GM12878 (cell line): ENCODE measurements at regions of chr17 and their contacts with region 1.

Region 1: DNA sequence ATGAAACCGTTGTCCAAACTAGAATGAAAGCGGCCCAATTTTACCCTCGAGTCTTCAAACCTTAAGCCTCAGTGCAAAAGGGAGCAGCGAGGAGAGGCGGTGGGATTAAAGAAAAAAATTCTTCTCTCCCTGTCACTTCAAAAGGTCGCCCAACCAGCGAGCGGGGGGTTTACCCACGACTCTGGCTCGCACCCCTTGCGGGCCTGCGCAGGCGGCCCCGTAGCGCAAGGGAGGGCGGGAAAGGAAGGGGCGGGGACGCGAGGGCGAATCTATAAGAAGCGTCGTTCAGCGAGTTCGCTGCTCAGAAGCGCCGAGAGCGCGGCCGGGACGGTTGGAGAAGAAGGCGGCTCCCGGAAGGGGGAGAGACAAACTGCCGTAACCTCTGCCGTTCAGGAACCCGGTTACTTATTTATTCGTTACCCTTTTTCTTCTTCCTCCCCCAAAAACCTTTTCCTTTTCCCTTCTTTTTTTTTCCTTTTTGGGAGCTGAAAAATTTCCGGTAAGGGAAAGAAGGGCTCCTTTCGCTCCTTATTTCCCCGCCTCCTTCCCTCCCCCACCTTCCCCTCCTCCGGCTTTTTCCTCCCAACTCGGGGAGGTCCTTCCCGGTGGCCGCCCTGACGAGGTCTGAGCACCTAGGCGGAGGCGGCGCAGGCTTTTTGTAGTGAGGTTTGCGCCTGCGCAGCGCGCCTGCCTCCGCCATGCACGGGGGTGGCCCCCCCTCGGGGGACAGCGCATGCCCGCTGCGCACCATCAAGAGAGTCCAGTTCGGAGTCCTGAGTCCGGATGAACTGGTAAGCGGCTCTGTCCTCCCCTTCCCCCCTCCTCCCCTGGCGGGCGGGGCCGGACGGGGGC is at the start of gene POLR2A:
- DNase-seq: peak; percentile 95
- ATAC-seq: peak; percentile 76
- H3K4me3 ChIP-seq: peak within 1 kb of the TSS; percentile 99
- H3K27ac ChIP-seq: peak within 1 kb of the TSS; percentile 100
- H3K4me1 ChIP-seq: no peaks in the 10 kb centered on the region; the same call in 1 of the 2 replicates
- H3K27me3 ChIP-seq: no peaks in the 10 kb centered on the region
- CTCF ChIP-seq: no peak
- EP300 ChIP-seq: peak in 1 of 2 experiments; percentile 63; a peak in 3 of 4 replicates
- POLR2A ChIP-seq: peak; percentile 98
- RAD21 ChIP-seq: no peak
- polyA plus RNA-seq, gene POLR2A: 1.7 to 2.8 TPM

Region 2: GRCh38 chr17:7336240-7337175 is 147.8 kb before region 1 on chr17 and contains the start of gene ACAP1:
- CTCF ChIA-PET with region 1: no interaction called
- POLR2A ChIA-PET with region 1: interaction called, 12 read pairs
- RAD21 ChIA-PET with region 1: no interaction called
- SMC1A ChIA-PET with region 1: no interaction called
- in situ Hi-C with region 1: no loop called
- intact Hi-C with region 1: no loop called
- DNase-seq: no peak
- ATAC-seq: peak; percentile 93
- H3K4me3 ChIP-seq: peak within 1 kb of the TSS; percentile 96
- H3K27ac ChIP-seq: peak within 1 kb of the TSS; percentile 99
- H3K4me1 ChIP-seq: peaks cover 27% of the 10 kb centered on the region
- H3K27me3 ChIP-seq: no peaks in the 10 kb centered on the region
- CTCF ChIP-seq: 0 out of 6 replicates have a peak, but pooled peaks of 1 of the 3 experiments have one; percentile 11
- EP300 ChIP-seq: peak in 1 of 2 experiments; percentile 13; a peak in 1 of 4 replicates
- POLR2A ChIP-seq: peak; percentile 45
- RAD21 ChIP-seq: no peak
- polyA plus RNA-seq, gene ACAP1: 5.7 to 25.2 TPM

Region 3: GRCh38 chr17:7410634-7411426 is 73.5 kb before region 1 on chr17:
- CTCF ChIA-PET with region 1: no interaction called
- POLR2A ChIA-PET with region 1: no interaction called
- RAD21 ChIA-PET with region 1: no interaction called
- SMC1A ChIA-PET with region 1: no interaction called
- in situ Hi-C with region 1: no loop called
- intact Hi-C with region 1: no loop called
- DNase-seq: no peak
- ATAC-seq: no peak
- H3K4me3 ChIP-seq: no peak overlapping the region
- H3K27ac ChIP-seq: no peak overlapping the region
- H3K4me1 ChIP-seq: no peaks in the 10 kb centered on the region
- H3K27me3 ChIP-seq: peaks cover 0 to 2% of the 10 kb centered on the region in 2 experiments; a peak in 3 of 4 replicates
- CTCF ChIP-seq: no peak
- EP300 ChIP-seq: no peak
- POLR2A ChIP-seq: no peak
- RAD21 ChIP-seq: no peak

Region 4: DNA sequence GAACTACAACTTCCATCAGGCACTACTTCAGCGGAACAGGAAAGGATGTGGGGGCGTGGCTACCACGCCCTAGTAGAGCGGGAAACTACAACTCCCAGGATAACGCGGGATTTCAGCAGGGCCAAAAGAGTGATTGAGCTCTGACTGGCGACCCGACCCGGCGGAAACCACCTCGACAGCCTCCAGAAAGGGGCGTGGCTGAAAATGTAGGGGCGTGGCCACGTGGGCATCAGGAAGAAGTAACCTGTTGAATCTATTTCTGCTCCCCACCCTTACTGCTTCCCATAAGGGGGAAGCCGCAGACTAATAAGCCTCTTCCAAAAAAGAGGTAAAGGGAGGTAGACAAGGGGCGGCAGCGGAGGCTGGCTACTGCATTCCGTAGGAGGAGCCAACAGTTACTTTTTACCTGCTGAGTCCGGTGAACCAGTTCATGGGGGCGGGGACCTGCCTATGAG is 49.0 kb before region 1 on chr17 and contains the start of gene TMEM102:
- CTCF ChIA-PET with region 1: interaction called, 28 read pairs
- POLR2A ChIA-PET with region 1: interaction called, 63 read pairs
- RAD21 ChIA-PET with region 1: interaction called, 19 read pairs
- SMC1A ChIA-PET with region 1: interaction called, 24 read pairs
- in situ Hi-C with region 1: no loop called
- intact Hi-C with region 1: loop called (anchors 1 kb)
- DNase-seq: peak; percentile 97
- ATAC-seq: peak; percentile 87
- H3K4me3 ChIP-seq: peak within 1 kb of the TSS; percentile 78
- H3K27ac ChIP-seq: peak within 1 kb of the TSS; percentile 60
- H3K4me1 ChIP-seq: peaks cover 19% of the 10 kb centered on the region
- H3K27me3 ChIP-seq: peaks cover 0 to 4% of the 10 kb centered on the region in 2 experiments; a peak in 1 of 4 replicates
- CTCF ChIP-seq: no peak
- EP300 ChIP-seq: no peak
- POLR2A ChIP-seq: 0 out of 2 replicates have a peak, but pooled peaks have one; percentile 28
- RAD21 ChIP-seq: no peak
- polyA plus RNA-seq, gene TMEM102: 0.04 TPM in 1 of 2 experiments, not detected in the other

Region 5: GRCh38 chr17:7454980-7455379 is 29.3 kb before region 1 on chr17:
- CTCF ChIA-PET with region 1: interaction called, 3 read pairs
- POLR2A ChIA-PET with region 1: interaction called, 17 read pairs
- RAD21 ChIA-PET with region 1: no interaction called
- SMC1A ChIA-PET with region 1: interaction called, 6 read pairs
- in situ Hi-C with region 1: no loop called
- intact Hi-C with region 1: loop called (anchors 1 kb)
- DNase-seq: no peak
- ATAC-seq: no peak
- H3K4me3 ChIP-seq: peak overlapping the region; percentile 83; the same call in 1 of the 2 replicates
- H3K27ac ChIP-seq: no peak overlapping the region
- H3K4me1 ChIP-seq: peaks cover 6% of the 10 kb centered on the region
- H3K27me3 ChIP-seq: no peaks in the 10 kb centered on the region
- CTCF ChIP-seq: no peak
- EP300 ChIP-seq: no peak
- POLR2A ChIP-seq: no peak
- RAD21 ChIP-seq: no peak

Region 6: DNA sequence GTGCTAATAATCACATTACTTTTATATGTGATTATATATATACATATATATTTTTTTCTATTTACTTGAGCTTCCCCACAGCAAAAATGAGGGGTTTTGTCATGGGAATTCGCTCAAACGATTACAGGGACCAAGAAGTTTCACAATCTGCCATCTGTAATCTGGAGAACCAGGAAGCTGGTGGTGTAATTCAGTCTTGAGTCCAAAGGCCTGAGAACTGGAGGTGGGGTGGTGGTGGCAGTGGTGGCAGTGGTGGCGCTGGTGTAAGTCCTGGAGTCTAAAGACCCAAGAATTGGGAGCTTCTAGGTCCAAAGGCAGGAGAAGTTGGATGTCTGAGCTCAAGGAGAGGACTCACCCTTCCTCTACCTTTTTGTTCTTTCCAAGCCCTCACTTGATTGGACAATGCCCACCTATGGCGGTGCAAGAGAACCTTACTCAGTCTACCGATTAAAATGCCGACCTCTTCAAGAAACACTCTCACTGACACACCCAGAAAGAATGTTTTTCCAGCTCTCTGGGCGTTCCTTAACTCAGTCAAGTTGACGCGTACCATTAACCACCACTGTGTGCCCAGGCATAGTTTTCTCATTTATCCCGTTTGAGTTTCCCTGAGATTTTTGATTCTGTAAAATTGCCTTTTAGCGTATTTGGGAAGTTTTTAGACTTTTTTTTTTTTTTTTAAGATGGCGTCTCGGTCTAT is 31.8 kb after region 1 on chr17:
- CTCF ChIA-PET with region 1: interaction called, 20 read pairs
- POLR2A ChIA-PET with region 1: interaction called, 3 read pairs
- RAD21 ChIA-PET with region 1: no interaction called
- SMC1A ChIA-PET with region 1: no interaction called
- in situ Hi-C with region 1: no loop called
- intact Hi-C with region 1: no loop called
- DNase-seq: no peak
- ATAC-seq: no peak
- H3K4me3 ChIP-seq: no peak overlapping the region
- H3K27ac ChIP-seq: no peak overlapping the region
- H3K4me1 ChIP-seq: no peaks in the 10 kb centered on the region
- H3K27me3 ChIP-seq: no peaks in the 10 kb centered on the region
- CTCF ChIP-seq: no peak
- EP300 ChIP-seq: no peak
- POLR2A ChIP-seq: no peak
- RAD21 ChIP-seq: no peak

Region 7: GRCh38 chr17:7618608-7619007 is 134.3 kb after region 1 on chr17:
- CTCF ChIA-PET with region 1: no interaction called
- POLR2A ChIA-PET with region 1: no interaction called
- RAD21 ChIA-PET with region 1: no interaction called
- SMC1A ChIA-PET with region 1: no interaction called
- in situ Hi-C with region 1: no loop called
- intact Hi-C with region 1: no loop called
- DNase-seq: no peak
- ATAC-seq: no peak
- H3K4me3 ChIP-seq: no peak overlapping the region
- H3K27ac ChIP-seq: no peak overlapping the region
- H3K4me1 ChIP-seq: no peaks in the 10 kb centered on the region
- H3K27me3 ChIP-seq: no peaks in the 10 kb centered on the region
- CTCF ChIP-seq: no peak
- EP300 ChIP-seq: no peak
- POLR2A ChIP-seq: no peak
- RAD21 ChIP-seq: no peak